ENCODE measurements at regions of chr10 and their contacts with region 1.

Region 1: DNA sequence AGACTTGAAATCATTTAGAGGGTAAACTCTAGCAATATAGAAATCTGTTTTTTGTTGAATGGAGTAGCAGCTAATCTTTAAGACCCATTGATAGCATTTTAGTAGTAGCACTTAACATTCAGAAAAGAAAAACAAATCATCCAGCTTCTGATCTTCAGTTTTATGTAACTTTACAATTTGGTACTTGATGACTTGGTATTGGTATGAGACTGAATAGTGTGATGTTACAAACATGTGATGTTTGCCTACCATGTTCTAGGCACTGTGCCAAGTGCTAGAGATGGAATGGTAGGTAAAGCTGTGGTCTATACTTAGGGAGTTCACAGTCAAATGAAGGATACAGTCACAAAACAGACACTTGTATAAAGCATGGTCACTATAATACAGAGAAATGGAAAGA is 21.3 kb downstream of the ZEB1 start:
- DNase-seq: peak in 2 of 9 experiments; percentile 16 to 27
- ATAC-seq: no peak
- H3K4me3 ChIP-seq: no peak overlapping the region
- H3K4me3 Mint-ChIP-seq: no peak overlapping the region
- H3K27ac ChIP-seq: no peak overlapping the region
- H3K27ac Mint-ChIP-seq: no peak overlapping the region
- H3K4me1 ChIP-seq: peaks cover 36% of the 10 kb centered on the region
- H3K4me1 Mint-ChIP-seq: peaks cover 38% of the 10 kb centered on the region
- H3K27me3 ChIP-seq: no peaks in the 10 kb centered on the region
- H3K27me3 Mint-ChIP-seq: no peaks in the 10 kb centered on the region
- CTCF ChIP-seq: no peak

Region 2: GRCh38 chr10:31359979-31360378 is 19.6 kb after region 1 on chr10:
- CTCF ChIA-PET with region 1: interaction called, 3 read pairs
- POLR2A ChIA-PET with region 1: no interaction called
- intact Hi-C with region 1: loop called in 1 of 2 experiments (anchors 2 kb)
- DNase-seq: no peak
- ATAC-seq: no peak
- H3K4me3 ChIP-seq: no peak overlapping the region
- H3K4me3 Mint-ChIP-seq: no peak overlapping the region
- H3K27ac ChIP-seq: no peak overlapping the region
- H3K27ac Mint-ChIP-seq: no peak overlapping the region
- H3K4me1 ChIP-seq: no peaks in the 10 kb centered on the region
- H3K4me1 Mint-ChIP-seq: peaks cover 43% of the 10 kb centered on the region
- H3K27me3 ChIP-seq: no peaks in the 10 kb centered on the region
- H3K27me3 Mint-ChIP-seq: no peaks in the 10 kb centered on the region
- CTCF ChIP-seq: no peak

Region 3: DNA sequence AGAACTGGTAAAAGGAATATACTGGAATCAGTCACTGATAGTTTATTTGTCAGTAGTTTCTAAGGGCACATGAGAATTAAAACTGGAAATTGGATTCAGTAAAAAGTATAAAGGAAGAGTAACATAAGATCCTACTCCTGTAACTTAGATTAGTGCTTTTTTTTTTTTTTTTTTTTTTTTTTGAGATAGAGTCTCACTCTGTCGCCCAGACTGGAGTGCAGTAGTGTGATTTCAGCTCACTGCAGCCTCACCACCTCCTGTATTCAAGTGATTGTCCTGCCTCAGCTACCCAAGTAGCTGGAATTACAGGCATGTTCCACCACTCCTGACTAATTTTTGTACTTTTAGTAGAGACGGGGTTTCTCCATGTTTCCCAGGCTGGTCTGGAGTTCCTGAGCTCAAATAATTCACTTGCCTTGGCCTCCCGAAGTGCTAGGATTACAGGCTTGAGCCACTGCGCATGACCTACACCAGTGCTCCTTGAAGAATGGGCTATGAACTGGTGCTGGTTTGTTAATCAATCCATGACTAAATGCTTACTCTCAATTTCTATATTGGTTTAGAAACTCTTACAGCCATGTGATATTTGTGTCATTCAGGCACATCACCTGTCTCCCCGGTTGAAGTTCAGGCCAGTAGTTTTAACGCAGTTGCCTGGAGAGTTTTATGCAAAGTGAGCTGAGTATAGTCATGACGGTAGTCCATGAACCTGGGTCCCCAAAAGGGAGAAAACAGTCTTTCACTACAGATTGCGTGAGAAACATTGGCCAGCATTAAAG is 43.7 kb after region 1 on chr10:
- CTCF ChIA-PET with region 1: no interaction called
- POLR2A ChIA-PET with region 1: no interaction called
- intact Hi-C with region 1: loop called in 1 of 2 experiments (anchors 5 kb)
- DNase-seq: no peak
- ATAC-seq: no peak
- H3K4me3 ChIP-seq: no peak overlapping the region
- H3K4me3 Mint-ChIP-seq: no peak overlapping the region
- H3K27ac ChIP-seq: no peak overlapping the region
- H3K27ac Mint-ChIP-seq: no peak overlapping the region
- H3K4me1 ChIP-seq: no peaks in the 10 kb centered on the region
- H3K4me1 Mint-ChIP-seq: peaks cover 47% of the 10 kb centered on the region
- H3K27me3 ChIP-seq: no peaks in the 10 kb centered on the region
- H3K27me3 Mint-ChIP-seq: no peaks in the 10 kb centered on the region
- CTCF ChIP-seq: no peak

Region 4: DNA sequence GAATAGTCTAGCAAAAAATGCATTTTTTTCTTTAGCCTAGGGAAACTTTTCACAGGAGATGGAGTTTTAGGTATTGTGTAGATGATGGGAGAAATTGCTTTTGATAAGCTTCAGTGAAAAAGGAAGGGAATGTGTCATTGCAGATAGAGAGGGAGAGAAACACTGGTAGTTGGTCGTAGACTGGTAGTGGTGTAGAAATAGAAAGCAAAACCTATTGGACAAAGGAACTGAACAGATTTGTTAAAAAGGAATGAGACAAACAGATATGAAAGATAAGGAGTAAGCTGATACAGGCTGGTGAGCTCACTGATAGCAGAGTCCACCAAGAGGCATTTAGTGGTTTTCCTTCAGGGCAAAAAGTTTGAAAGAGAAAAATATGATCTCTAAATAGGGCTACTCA is 73.0 kb after region 1 on chr10:
- CTCF ChIA-PET with region 1: no interaction called
- POLR2A ChIA-PET with region 1: no interaction called
- intact Hi-C with region 1: no loop called
- DNase-seq: no peak
- ATAC-seq: no peak
- H3K4me3 ChIP-seq: no peak overlapping the region
- H3K4me3 Mint-ChIP-seq: no peak overlapping the region
- H3K27ac ChIP-seq: no peak overlapping the region
- H3K27ac Mint-ChIP-seq: peak overlapping the region; percentile 6
- H3K4me1 ChIP-seq: no peaks in the 10 kb centered on the region
- H3K4me1 Mint-ChIP-seq: peaks cover 60% of the 10 kb centered on the region
- H3K27me3 ChIP-seq: no peaks in the 10 kb centered on the region
- H3K27me3 Mint-ChIP-seq: no peaks in the 10 kb centered on the region
- CTCF ChIP-seq: no peak

Measured in CD8-positive, alpha-beta T cell (primary cell).